ENCODE measurements at regions of chr16 and their contacts with region 1.

Region 1: DNA sequence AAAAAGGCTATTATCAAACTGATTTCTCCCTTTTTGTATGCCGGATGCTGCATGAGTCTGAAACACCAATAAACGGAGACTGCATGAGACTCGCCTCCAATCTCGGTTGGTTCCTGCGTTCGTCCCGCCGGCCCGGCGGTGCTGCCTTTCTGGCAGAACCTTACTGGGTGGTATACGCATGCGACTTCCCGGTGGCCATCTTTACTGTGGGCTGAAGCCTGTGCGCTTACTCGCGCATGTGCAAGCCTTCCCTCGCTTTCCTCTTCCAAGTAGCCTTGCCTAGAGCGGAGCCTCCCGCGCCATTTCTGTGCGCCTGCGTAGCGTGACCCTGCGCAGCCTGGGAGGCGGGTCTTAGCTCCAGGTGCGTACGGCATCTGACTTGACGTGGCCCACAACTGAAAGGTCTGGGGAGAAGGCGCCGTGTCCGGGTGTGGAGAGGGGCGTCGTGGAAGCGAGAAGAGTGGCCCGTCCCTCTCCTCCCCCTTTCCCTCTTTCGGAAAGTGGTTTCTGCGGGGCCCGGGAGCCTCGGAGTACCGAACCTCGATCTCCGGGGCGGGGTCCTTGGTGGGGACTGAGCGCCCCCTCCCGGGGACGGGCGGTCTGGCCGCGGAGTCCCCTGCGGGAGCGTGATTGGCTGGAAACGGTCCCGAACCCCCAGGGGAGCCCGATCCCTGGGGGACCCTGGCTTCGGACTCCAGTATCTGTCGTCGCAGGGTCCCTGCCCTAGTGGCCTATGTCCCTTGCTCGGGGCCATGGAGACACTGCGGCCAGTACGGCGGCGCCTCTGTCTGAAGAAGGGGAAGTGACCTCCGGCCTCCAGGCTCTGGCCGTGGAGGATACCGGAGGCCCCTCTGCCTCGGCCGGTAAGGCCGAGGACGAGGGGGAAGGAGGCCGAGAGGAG is at the start of gene PAGR1:
- H3K4me3 ChIP-seq: peak within 1 kb of the TSS; percentile 78
- H3K27ac ChIP-seq: peak within 1 kb of the TSS; percentile 96
- H3K4me1 ChIP-seq: peaks cover 19% of the 10 kb centered on the region
- CTCF ChIP-seq: no peak

Region 2: GRCh38 chr16:29745853-29746345 is 70.1 kb before region 1 on chr16 and contains the start of gene C16orf54:
- CTCF ChIA-PET with region 1: no interaction called
- POLR2A ChIA-PET with region 1: no interaction called
- H3K4me3 ChIP-seq: no peak within 1 kb of the TSS
- H3K27ac ChIP-seq: no peak within 1 kb of the TSS
- H3K4me1 ChIP-seq: no peaks in the 10 kb centered on the region
- CTCF ChIP-seq: no peak

Region 3: DNA sequence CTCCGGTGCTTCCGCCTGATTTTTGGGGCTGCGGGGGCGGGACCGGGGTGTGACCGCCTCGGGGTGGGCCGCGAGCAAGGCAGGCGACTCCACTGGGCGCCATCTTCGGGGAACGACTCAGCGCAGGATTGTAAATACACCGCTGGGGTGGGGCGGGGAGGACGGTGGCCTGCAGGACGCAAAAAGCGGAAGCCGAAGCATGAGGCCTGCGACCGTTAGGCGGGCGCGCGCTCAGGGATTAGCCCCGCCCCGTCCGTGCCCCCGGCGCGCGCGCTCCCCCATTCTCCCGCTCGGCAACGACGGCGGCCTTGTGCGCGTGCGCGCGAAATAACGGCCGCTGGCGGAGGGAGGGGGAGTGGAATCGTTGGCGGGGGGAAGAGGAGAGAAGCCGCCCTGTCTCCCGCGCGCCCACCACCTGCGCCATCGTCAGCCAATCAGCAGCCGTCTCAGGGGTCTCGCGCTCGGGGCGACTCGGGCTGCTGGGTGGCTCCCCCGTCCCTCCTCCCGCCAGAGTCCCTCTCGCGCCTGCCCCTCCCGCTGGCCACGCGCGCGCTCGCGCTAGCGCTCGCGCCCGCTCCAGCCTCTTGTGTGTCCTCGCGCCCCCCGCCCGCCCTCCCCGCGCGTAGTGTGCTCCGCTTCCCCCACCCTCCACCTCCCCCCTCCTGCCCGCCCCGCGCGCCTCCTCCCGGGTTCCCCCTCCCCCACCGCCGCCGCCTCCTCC is 10.5 kb before region 1 on chr16:
- CTCF ChIA-PET with region 1: interaction called, 13 read pairs
- POLR2A ChIA-PET with region 1: interaction called, 106 read pairs
- H3K4me3 ChIP-seq: peak overlapping the region; percentile 53
- H3K27ac ChIP-seq: peak overlapping the region; percentile 100
- H3K4me1 ChIP-seq: peaks cover 13% of the 10 kb centered on the region
- CTCF ChIP-seq: peak; percentile 60